ENCODE measurements at regions of chr10 and their contacts with region 1.

Region 1: DNA sequence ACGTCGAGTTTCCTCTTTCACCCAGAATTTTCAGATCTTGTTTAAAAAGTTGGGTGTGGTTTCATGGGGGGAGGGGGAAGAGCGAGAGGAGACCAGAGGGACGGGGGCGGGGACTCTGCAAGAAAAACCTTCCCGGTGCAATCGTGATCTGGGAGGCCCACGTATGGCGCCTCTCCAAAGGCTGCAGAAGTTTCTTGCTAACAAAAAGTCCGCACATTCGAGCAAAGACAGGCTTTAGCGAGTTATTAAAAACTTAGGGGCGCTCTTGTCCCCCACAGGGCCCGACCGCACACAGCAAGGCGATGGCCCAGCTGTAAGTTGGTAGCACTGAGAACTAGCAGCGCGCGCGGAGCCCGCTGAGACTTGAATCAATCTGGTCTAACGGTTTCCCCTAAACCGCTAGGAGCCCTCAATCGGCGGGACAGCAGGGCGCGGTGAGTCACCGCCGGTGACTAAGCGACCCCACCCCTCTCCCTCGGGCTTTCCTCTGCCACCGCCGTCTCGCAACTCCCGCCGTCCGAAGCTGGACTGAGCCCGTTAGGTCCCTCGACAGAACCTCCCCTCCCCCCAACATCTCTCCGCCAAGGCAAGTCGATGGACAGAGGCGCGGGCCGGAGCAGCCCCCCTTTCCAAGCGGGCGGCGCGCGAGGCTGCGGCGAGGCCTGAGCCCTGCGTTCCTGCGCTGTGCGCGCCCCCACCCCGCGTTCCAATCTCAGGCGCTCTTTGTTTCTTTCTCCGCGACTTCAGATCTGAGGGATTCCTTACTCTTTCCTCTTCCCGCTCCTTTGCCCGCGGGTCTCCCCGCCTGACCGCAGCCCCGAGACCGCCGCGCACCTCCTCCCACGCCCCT is at the start of gene VIM:
- DNase-seq: peak; percentile 87 to 97
- ATAC-seq: peak; percentile 72 to 76
- H3K4me3 ChIP-seq: peak within 1 kb of the TSS; percentile 94
- H3K27ac ChIP-seq: peak within 1 kb of the TSS; percentile 92 to 100
- H3K4me1 ChIP-seq: peaks cover 36% of the 10 kb centered on the region
- CTCF ChIP-seq: no peak
- EP300 ChIP-seq: no peak
- POLR2A ChIP-seq: peak; percentile 58
- RAD21 ChIP-seq: peak in 1 of 2 experiments; percentile 27; a peak in 2 of 5 replicates
- polyA plus RNA-seq, gene VIM: 773 and 848 TPM in 2 replicates

Region 2: GRCh38 chr10:16853201-16853600 is 375.1 kb before region 1 on chr10:
- CTCF ChIA-PET with region 1: interaction called, 18 read pairs
- POLR2A ChIA-PET with region 1: no interaction called
- DNase-seq: peak in 1 of 2 experiments; percentile 39
- ATAC-seq: peak in 1 of 2 experiments; percentile 65; a peak in 1 of 6 replicates
- H3K4me3 ChIP-seq: no peak overlapping the region
- H3K27ac ChIP-seq: no peak overlapping the region
- H3K4me1 ChIP-seq: no peaks in the 10 kb centered on the region
- CTCF ChIP-seq: peak; percentile 53
- EP300 ChIP-seq: no peak
- POLR2A ChIP-seq: no peak
- RAD21 ChIP-seq: peak; percentile 70 to 79

Region 3: GRCh38 chr10:17062955-17063484 is 165.3 kb before region 1 on chr10:
- CTCF ChIA-PET with region 1: interaction called, 6 read pairs
- POLR2A ChIA-PET with region 1: interaction called, 10 read pairs
- DNase-seq: peak; percentile 58 to 83
- ATAC-seq: peak; percentile 96 to 99
- H3K4me3 ChIP-seq: no peak overlapping the region
- H3K27ac ChIP-seq: peak overlapping the region; percentile 36 to 78
- H3K4me1 ChIP-seq: peaks cover 37% of the 10 kb centered on the region
- CTCF ChIP-seq: no peak
- EP300 ChIP-seq: no peak
- POLR2A ChIP-seq: no peak
- RAD21 ChIP-seq: no peak; a peak in 1 of 5 replicates

Region 4: GRCh38 chr10:17200912-17201793 is 27.2 kb before region 1 on chr10 and contains the start of gene TRDMT1:
- CTCF ChIA-PET with region 1: interaction called, 47 read pairs
- POLR2A ChIA-PET with region 1: interaction called, 96 read pairs
- DNase-seq: peak; percentile 76 to 92
- ATAC-seq: peak; percentile 99 to 100
- H3K4me3 ChIP-seq: peak within 1 kb of the TSS; percentile 65
- H3K27ac ChIP-seq: peak within 1 kb of the TSS; percentile 88 to 96
- H3K4me1 ChIP-seq: peaks cover 15% of the 10 kb centered on the region
- CTCF ChIP-seq: no peak; the same call in 2 of the 3 replicates
- EP300 ChIP-seq: peak in 1 of 2 experiments; percentile 16; a peak in 1 of 5 replicates
- POLR2A ChIP-seq: peak; percentile 51
- RAD21 ChIP-seq: peak; percentile 34 to 39
- polyA plus RNA-seq, gene TRDMT1: 5.7 and 7.4 TPM in 2 replicates

Region 5: GRCh38 chr10:17206210-17206709 is 22.1 kb before region 1 on chr10:
- CTCF ChIA-PET with region 1: interaction called, 53 read pairs
- POLR2A ChIA-PET with region 1: interaction called, 96 read pairs
- DNase-seq: peak in 1 of 2 experiments; percentile 44
- ATAC-seq: peak; percentile 69 to 82
- H3K4me3 ChIP-seq: no peak overlapping the region
- H3K27ac ChIP-seq: peak overlapping the region; percentile 10 to 70; a peak in 3 of 6 replicates
- H3K4me1 ChIP-seq: peaks cover 26% of the 10 kb centered on the region
- CTCF ChIP-seq: no peak
- EP300 ChIP-seq: no peak
- POLR2A ChIP-seq: no peak
- RAD21 ChIP-seq: no peak

Region 6: GRCh38 chr10:17216217-17216900 is 12.0 kb before region 1 on chr10:
- CTCF ChIA-PET with region 1: interaction called, 53 read pairs
- POLR2A ChIA-PET with region 1: interaction called, 26 read pairs
- DNase-seq: peak; percentile 83 to 88
- ATAC-seq: peak; percentile 91 to 93
- H3K4me3 ChIP-seq: no peak overlapping the region
- H3K27ac ChIP-seq: peak overlapping the region; percentile 58 to 86; a peak in 5 of 6 replicates
- H3K4me1 ChIP-seq: peaks cover 55% of the 10 kb centered on the region
- CTCF ChIP-seq: no peak
- EP300 ChIP-seq: no peak
- POLR2A ChIP-seq: no peak
- RAD21 ChIP-seq: no peak